ENCODE measurements at regions of chr2 and their contacts with region 1.

Region 1: DNA sequence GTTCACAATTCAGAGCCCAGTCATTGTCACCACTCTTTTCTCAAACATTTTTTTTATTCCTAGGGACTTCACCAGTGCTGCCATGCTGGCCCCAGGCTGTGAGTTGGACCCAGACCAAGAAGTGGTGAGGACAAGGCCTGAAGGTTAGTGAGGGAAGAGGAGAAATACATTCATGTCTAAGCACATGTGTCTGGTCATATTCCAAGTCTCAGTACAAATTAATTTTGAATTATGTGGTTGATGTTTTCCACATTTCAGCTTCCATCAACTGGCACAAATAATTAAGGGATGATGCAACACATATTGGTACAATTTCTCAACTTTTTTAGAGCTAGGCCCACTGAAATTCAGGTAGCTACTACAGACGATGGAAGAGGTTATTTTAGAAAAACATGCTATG is 106.6 kb upstream of the UPP2 start:
- DNase-seq: no peak
- H3K4me3 Mint-ChIP-seq: no peak overlapping the region
- H3K27ac Mint-ChIP-seq: no peak overlapping the region
- H3K4me1 Mint-ChIP-seq: no peaks in the 10 kb centered on the region
- H3K27me3 Mint-ChIP-seq: peaks cover 6% of the 10 kb centered on the region

Region 2: GRCh38 chr2:157497638-157498314 is 497.3 kb before region 1 on chr2:
- intact Hi-C with region 1: loop called (anchors 5 kb)
- DNase-seq: no peak
- H3K4me3 Mint-ChIP-seq: no peak overlapping the region
- H3K27ac Mint-ChIP-seq: no peak overlapping the region
- H3K4me1 Mint-ChIP-seq: peaks cover 18% of the 10 kb centered on the region
- H3K27me3 Mint-ChIP-seq: no peaks in the 10 kb centered on the region

Measured in activated T-helper 2 cell treated with anti-CD3 and anti-CD28 coated beads, Interferon-gamma antibody, Interleukin-2, Interleukin-4, amounts not matched to agents 10 μg/mL and 5 μg/mL and 100 μg/mL, durations not matched to agents 14 hours and 24 hours and 36 hours (primary cell).